ENCODE measurements at regions of chr9 and their contacts with region 1.

Region 1: DNA sequence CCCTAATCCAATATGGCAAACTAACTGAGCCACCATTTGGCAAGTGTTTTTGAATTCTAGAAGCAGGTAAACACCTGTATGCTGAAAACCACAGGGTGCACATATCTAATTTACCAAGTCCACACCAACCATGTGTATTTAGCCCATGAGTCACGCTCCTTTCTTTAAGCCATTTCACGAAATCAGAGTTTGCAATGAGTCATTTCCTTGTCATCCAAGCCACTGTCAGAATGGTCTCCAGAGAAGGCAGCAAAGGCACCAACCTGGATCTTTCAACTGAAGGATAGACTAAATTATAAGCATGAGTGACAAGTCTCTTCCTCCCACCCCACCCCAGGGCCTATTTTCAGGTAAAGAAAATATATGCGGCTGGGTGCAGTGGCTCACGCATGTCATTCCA is 110.0 kb downstream of the PAX5 start:
- DNase-seq: peak; percentile 68
- H3K4me3 Mint-ChIP-seq: peak overlapping the region; percentile 17
- H3K27ac Mint-ChIP-seq: peak overlapping the region; percentile 68
- H3K4me1 Mint-ChIP-seq: peaks cover 44% of the 10 kb centered on the region
- H3K27me3 Mint-ChIP-seq: no peaks in the 10 kb centered on the region

Region 2: GRCh38 chr9:36969216-36969771 is 45.2 kb after region 1 on chr9:
- intact Hi-C with region 1: loop called (anchors 5 kb)
- DNase-seq: no peak
- H3K4me3 Mint-ChIP-seq: no peak overlapping the region
- H3K27ac Mint-ChIP-seq: no peak overlapping the region
- H3K4me1 Mint-ChIP-seq: no peaks in the 10 kb centered on the region
- H3K27me3 Mint-ChIP-seq: no peaks in the 10 kb centered on the region

Measured in activated CD4-positive, alpha-beta T cell treated with anti-CD3 and anti-CD28 coated beads, Interleukin-2, amount 10 ng/mL, durations not matched to agents 24 days and 14 days (primary cell).